ENCODE measurements at regions of chr2 and their contacts with region 1.

Region 1: DNA sequence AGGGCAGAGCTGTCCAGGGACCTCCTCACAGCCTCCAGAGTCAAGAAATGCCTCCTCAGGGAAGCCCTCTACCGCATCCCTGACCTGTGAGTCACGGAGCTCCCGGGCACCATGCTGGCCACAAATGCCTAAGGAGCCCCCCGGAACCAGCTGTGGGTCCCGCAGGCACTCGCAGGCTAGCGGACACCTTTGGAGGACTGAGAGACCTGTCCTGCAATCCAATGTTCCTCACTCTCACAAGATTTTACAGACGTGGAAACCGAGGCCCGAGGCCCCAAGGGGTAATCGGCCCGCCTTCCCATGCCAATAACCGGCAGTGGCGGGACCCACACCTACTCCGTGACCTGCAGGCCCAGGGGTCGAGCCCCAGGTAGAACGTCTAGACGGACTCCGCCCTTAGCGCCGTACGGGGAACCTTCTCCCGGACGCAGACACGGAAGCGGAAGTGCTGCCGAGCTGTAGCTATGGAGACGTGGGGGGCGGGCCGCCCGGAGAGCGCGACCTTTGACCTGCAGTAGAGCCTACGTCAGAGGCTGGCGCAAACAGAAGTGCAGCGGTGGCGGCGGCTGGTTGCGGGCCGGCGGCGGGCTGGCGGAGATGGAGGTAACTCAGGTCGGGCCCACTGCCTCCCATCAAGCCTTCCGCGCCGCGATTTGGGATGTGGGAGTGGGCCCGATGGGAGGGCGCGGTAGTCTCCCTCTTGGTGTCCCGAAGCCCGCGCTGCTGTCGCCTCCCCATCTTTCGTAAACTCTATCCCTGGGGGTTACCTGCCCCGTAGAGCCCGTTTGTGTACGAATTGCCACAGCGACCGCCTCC is at the start of gene GCC2:
- DNase-seq: peak; percentile 96
- ATAC-seq: peak; percentile 96
- H3K4me3 Mint-ChIP-seq: peak within 1 kb of the TSS; percentile 98
- H3K27ac Mint-ChIP-seq: peak within 1 kb of the TSS; percentile 96
- H3K4me1 Mint-ChIP-seq: peaks cover 53% of the 10 kb centered on the region
- H3K27me3 Mint-ChIP-seq: no peaks in the 10 kb centered on the region
- CTCF ChIP-seq: no peak
- total RNA-seq, gene GCC2: 44.0 and 53.8 TPM in 2 replicates

Region 2: DNA sequence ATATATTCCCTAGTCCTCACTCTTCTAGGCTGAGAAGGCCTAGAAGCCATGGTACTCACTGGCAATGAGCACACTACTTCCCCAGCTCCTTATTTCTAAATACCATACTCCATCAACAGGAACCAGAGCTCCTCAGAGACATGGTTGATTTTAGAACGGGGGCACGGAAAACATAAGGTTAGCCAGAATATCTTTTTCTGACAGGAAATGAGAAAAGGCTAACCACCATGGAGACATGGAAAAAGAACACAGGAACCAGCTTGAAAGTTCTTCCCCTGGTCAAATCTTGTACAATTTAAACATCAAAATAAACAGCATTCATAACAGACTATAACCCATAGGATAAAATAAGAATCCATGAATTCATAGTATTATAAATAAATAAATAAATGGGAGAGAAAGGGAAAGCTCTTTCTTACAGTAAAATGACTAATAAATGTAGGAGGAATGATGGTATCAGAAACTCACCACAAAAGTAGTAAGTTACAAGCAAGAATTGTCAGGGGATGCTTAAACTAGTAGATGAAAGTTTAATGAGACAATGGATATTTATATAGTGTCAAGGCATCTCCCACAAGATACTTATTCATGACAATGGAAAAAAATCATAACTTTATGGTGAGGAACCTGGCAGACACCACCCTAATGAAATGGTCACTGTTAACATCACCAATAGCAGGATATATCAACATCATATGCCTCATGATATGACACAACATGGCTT is 20.4 kb before region 1 on chr2:
- CTCF ChIA-PET with region 1: no interaction called
- POLR2A ChIA-PET with region 1: no interaction called
- intact Hi-C with region 1: no loop called
- DNase-seq: no peak
- ATAC-seq: no peak
- H3K4me3 Mint-ChIP-seq: no peak overlapping the region
- H3K27ac Mint-ChIP-seq: no peak overlapping the region
- H3K4me1 Mint-ChIP-seq: no peaks in the 10 kb centered on the region
- H3K27me3 Mint-ChIP-seq: peaks cover 14% of the 10 kb centered on the region
- CTCF ChIP-seq: no peak

Region 3: GRCh38 chr2:108786354-108787199 is 337.7 kb after region 1 on chr2 and contains the start of gene CCDC138:
- CTCF ChIA-PET with region 1: no interaction called
- POLR2A ChIA-PET with region 1: no interaction called
- intact Hi-C with region 1: loop called (anchors 2 kb)
- DNase-seq: peak; percentile 92
- ATAC-seq: peak; percentile 97
- H3K4me3 Mint-ChIP-seq: peak within 1 kb of the TSS; percentile 99
- H3K27ac Mint-ChIP-seq: peak within 1 kb of the TSS; percentile 96
- H3K4me1 Mint-ChIP-seq: peaks cover 23% of the 10 kb centered on the region
- H3K27me3 Mint-ChIP-seq: no peaks in the 10 kb centered on the region
- CTCF ChIP-seq: no peak
- total RNA-seq, gene CCDC138: 10.3 and 10.6 TPM in 2 replicates

Region 4: GRCh38 chr2:109020217-109020637 is 571.3 kb after region 1 on chr2:
- CTCF ChIA-PET with region 1: no interaction called
- POLR2A ChIA-PET with region 1: no interaction called
- intact Hi-C with region 1: no loop called
- DNase-seq: no peak
- ATAC-seq: no peak
- H3K4me3 Mint-ChIP-seq: no peak overlapping the region
- H3K27ac Mint-ChIP-seq: no peak overlapping the region
- H3K4me1 Mint-ChIP-seq: no peaks in the 10 kb centered on the region
- H3K27me3 Mint-ChIP-seq: peaks cover 4% of the 10 kb centered on the region
- CTCF ChIP-seq: no peak

Region 5: DNA sequence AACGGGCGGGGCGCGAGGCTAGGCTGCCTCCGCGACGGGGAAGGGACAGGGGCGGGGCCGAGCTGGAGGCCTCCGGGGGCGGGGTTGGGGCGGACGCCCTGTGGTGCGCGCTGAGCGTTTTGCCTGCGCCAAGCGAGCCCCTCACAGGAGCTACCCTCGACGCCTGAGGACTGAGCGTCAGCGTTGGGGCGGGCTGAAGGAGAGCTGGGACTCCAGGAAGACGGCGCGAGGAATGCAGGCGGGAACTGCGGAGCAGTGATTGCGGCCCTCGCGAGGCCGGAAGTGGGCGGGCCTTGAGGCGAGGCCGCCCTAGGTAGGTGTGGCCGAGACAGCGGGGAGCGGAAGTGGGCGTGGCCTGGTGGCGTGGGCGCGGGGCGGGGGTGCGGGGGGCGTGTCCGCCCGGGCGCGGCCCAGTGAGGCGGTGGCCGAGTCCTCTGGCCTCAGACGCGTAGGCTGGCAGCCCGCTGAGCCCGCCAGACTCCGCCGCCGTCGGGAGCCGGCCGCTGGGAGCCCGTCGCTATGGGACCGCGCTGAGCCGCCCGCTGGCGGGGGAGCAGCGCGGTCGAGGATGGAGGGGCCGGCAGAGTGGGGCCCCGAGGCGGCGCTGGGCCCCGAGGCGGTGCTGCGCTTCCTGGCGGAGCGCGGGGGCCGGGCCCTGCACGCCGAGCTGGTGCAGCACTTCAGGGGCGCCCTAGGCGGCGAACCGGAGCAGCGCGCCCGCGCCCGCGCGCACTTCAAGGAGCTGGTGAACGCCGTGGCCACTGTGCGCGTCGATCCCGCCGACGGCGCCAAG is 1165.2 kb after region 1 on chr2 and contains the starts of genes SEPTIN10 and SOWAHC:
- CTCF ChIA-PET with region 1: no interaction called
- POLR2A ChIA-PET with region 1: no interaction called
- intact Hi-C with region 1: loop called (anchors 5 kb)
- DNase-seq: peak; percentile 61
- ATAC-seq: peak; percentile 88
- H3K4me3 Mint-ChIP-seq: peak within 1 kb of the TSS; percentile 85
- H3K27ac Mint-ChIP-seq: peak within 1 kb of the TSS; percentile 9
- H3K4me1 Mint-ChIP-seq: peaks cover 15% of the 10 kb centered on the region
- H3K27me3 Mint-ChIP-seq: peaks cover 60% of the 10 kb centered on the region
- CTCF ChIP-seq: no peak
- total RNA-seq, gene SEPTIN10: 0.35 and 0.69 TPM in 2 replicates
- total RNA-seq, gene SOWAHC: not detected in 2 replicates